ENCODE measurements at regions of chr6 and their contacts with region 1.

Region 1: GRCh38 chr6:162029873-162030576 is 697.5 kb downstream of the PRKN start:
- DNase-seq: no peak
- ATAC-seq: no peak

Region 2: GRCh38 chr6:162572240-162572639 is 542.2 kb after region 1 on chr6:
- intact Hi-C with region 1: loop called (anchors 5 kb)
- DNase-seq: no peak
- ATAC-seq: no peak